ENCODE measurements at regions of chr6 and their contacts with region 1.

Region 1: DNA sequence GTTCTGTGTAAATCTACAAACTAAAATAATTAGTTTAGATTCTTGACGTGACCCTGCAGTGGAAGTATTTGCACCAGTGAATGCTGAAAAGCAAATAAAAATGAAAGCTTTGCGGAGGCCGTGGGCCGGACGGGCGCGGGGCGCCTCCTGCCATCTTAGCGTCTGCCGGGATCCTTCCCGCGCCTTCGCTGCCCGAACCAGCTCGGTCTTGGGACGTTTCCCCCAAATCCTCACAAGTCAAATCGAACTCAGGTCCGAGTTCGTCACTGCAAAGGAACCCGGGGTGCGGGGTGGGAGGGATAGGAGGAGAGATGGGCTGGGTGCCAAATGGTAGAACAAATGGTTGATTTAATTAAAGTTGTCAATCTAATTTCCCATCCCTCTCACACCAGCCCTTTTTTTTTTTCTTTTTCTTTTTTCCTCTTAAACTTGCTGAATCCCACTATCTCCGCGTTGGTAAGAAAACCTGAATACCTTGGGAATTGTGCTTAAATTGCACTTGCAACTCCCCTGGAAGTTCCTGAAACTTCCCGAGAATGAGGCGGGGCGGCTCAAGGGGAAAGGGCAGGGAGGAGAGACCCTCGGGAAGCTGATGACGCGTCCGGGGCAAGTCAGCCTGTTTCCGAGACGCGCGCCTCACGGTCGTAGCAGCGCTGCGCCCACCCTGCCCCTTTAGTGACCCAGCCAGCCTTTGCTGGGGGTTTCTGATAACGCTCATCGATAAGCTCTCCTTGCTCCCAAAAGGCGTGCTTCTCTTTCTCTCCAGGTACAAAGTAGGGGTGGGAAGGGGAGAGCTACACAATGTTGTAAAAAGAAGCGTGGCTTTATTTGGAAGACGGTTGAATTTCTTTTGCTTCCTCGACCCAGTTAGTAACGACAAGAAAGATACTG is 1.8 kb downstream of the GJA1 start:
- DNase-seq: peak in 5 of 9 donors; percentile 6 to 26 (median 23)
- ATAC-seq: no peak
- H3K4me3 ChIP-seq: peak overlapping the region; percentile 59
- H3K4me3 Mint-ChIP-seq: peak overlapping the region; percentile 77 to 95 (median 88)
- H3K27ac ChIP-seq: no peak overlapping the region
- H3K27ac Mint-ChIP-seq: peak overlapping the region in 5 of 9 donors; percentile 36 to 72 (median 68)
- H3K4me1 ChIP-seq: peaks cover 0 to 7% of the 10 kb centered on the region in 2 donors
- H3K4me1 Mint-ChIP-seq: peaks cover 9 to 28% (median 20%) of the 10 kb centered on the region in 7 donors
- H3K27me3 ChIP-seq: peaks cover 0 to 4% of the 10 kb centered on the region in 2 donors
- H3K27me3 Mint-ChIP-seq: peaks cover 6 to 48% (median 25%) of the 10 kb centered on the region in 5 donors

Region 2: GRCh38 chr6:121351901-121352300 is 85.3 kb before region 1 on chr6:
- CTCF ChIA-PET with region 1: no interaction called
- POLR2A ChIA-PET with region 1: no interaction called
- intact Hi-C with region 1: no loop called
- DNase-seq: no peak
- ATAC-seq: no peak
- H3K4me3 ChIP-seq: no peak overlapping the region
- H3K4me3 Mint-ChIP-seq: no peak overlapping the region
- H3K27ac ChIP-seq: no peak overlapping the region
- H3K27ac Mint-ChIP-seq: no peak overlapping the region
- H3K4me1 ChIP-seq: no peaks in the 10 kb centered on the region
- H3K4me1 Mint-ChIP-seq: no peaks in the 10 kb centered on the region
- H3K27me3 ChIP-seq: no peaks in the 10 kb centered on the region
- H3K27me3 Mint-ChIP-seq: peaks cover 21 to 35% (median 31%) of the 10 kb centered on the region in 5 donors

Region 3: GRCh38 chr6:121460170-121460569 is 23.0 kb after region 1 on chr6:
- CTCF ChIA-PET with region 1: no interaction called
- POLR2A ChIA-PET with region 1: no interaction called
- intact Hi-C with region 1: no loop called
- DNase-seq: no peak
- ATAC-seq: no peak
- H3K4me3 ChIP-seq: no peak overlapping the region
- H3K4me3 Mint-ChIP-seq: no peak overlapping the region
- H3K27ac ChIP-seq: no peak overlapping the region
- H3K27ac Mint-ChIP-seq: no peak overlapping the region
- H3K4me1 ChIP-seq: no peaks in the 10 kb centered on the region
- H3K4me1 Mint-ChIP-seq: peaks cover 0 to 2% (median 0%) of the 10 kb centered on the region in 7 donors
- H3K27me3 ChIP-seq: no peaks in the 10 kb centered on the region
- H3K27me3 Mint-ChIP-seq: no peaks in the 10 kb centered on the region

Region 4: GRCh38 chr6:121959501-121959900 is 522.3 kb after region 1 on chr6:
- CTCF ChIA-PET with region 1: no interaction called
- POLR2A ChIA-PET with region 1: no interaction called
- intact Hi-C with region 1: loop called in 1 of 2 experiments (anchors 5 kb)
- DNase-seq: peak in 7 of 9 donors; percentile 9 to 59 (median 37)
- ATAC-seq: peak; percentile 60
- H3K4me3 ChIP-seq: no peak overlapping the region
- H3K4me3 Mint-ChIP-seq: peak overlapping the region in 8 of 10 donors; percentile 10 to 89 (median 69)
- H3K27ac ChIP-seq: no peak overlapping the region
- H3K27ac Mint-ChIP-seq: peak overlapping the region in 4 of 9 donors; percentile 34 to 49 (median 42)
- H3K4me1 ChIP-seq: peaks cover 0 to 7% of the 10 kb centered on the region in 2 donors
- H3K4me1 Mint-ChIP-seq: peaks cover 0 to 42% (median 30%) of the 10 kb centered on the region in 7 donors
- H3K27me3 ChIP-seq: no peaks in the 10 kb centered on the region
- H3K27me3 Mint-ChIP-seq: peaks cover 0 to 1% (median 0%) of the 10 kb centered on the region in 5 donors

Measured in naive thymus-derived CD4-positive, alpha-beta T cell (primary cell).